ENCODE measurements at regions of chr11 and their contacts with region 1.

Region 1: DNA sequence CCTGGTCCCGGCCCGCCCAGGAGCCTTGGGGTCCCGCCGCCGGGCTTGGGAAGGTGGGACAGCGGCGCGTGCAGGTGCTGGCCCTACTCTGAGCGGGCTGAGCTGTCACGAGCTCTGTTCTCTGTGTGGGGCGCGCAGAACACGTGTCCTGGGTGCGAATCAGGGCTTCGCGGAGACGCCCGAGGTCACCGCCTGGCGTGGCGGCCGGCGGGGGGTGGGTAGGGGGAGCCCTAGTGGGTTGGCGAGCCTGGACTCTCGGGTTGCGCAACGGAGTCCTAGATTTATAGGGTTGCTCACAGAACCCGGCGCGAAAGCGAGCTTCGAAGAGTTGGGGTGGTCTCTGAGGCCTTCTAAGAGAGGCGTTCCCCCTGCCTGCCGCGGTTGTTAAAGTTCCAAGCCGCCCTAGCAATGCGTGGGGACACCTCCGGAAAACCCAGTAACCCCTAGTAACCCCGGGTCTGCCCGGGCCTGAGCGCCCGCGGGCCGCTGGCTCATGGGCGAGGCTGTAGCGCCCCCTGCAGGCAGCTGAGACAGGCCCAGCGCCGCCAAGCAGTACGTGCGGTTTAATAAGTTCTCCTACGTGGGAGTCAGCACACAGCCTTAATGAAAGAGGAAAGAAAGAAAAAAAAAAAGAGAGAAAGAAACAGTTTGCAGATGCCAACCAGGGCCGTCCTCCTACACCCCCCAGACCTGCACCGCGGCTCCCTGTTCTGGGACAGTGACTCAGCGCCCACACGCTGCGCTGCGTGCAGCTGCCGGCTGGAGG is 2.8 kb downstream of the ADM start:
- DNase-seq: peak; percentile 83 to 90
- H3K4me3 ChIP-seq: peak overlapping the region; percentile 64
- H3K4me3 Mint-ChIP-seq: peak overlapping the region; percentile 85
- H3K27ac Mint-ChIP-seq: peak overlapping the region; percentile 81
- H3K4me1 ChIP-seq: peaks cover 28% of the 10 kb centered on the region
- H3K4me1 Mint-ChIP-seq: peaks cover 36% of the 10 kb centered on the region
- H3K27me3 ChIP-seq: no peaks in the 10 kb centered on the region
- H3K27me3 Mint-ChIP-seq: peaks cover 3% of the 10 kb centered on the region
- CTCF ChIP-seq: peak; percentile 88 to 97

Region 2: GRCh38 chr11:9613118-9613829 is 694.4 kb before region 1 on chr11:
- CTCF ChIA-PET with region 1: interaction called, 7 read pairs
- POLR2A ChIA-PET with region 1: interaction called, 4 read pairs
- intact Hi-C with region 1: loop called (anchors 1 kb)
- DNase-seq: peak; percentile 97 to 99
- H3K4me3 ChIP-seq: peak overlapping the region; percentile 43
- H3K4me3 Mint-ChIP-seq: peak overlapping the region; percentile 93
- H3K27ac Mint-ChIP-seq: peak overlapping the region; percentile 98
- H3K4me1 ChIP-seq: peaks cover 33% of the 10 kb centered on the region
- H3K4me1 Mint-ChIP-seq: peaks cover 37% of the 10 kb centered on the region
- H3K27me3 ChIP-seq: no peaks in the 10 kb centered on the region
- H3K27me3 Mint-ChIP-seq: no peaks in the 10 kb centered on the region
- CTCF ChIP-seq: peak; percentile 86 to 98

Region 3: GRCh38 chr11:9990221-9990975 is 317.2 kb before region 1 on chr11:
- CTCF ChIA-PET with region 1: no interaction called
- POLR2A ChIA-PET with region 1: no interaction called
- intact Hi-C with region 1: loop called (anchors 1 kb)
- DNase-seq: peak in 1 of 2 experiments; percentile 17
- H3K4me3 ChIP-seq: no peak overlapping the region
- H3K4me3 Mint-ChIP-seq: no peak overlapping the region
- H3K27ac Mint-ChIP-seq: no peak overlapping the region
- H3K4me1 ChIP-seq: no peaks in the 10 kb centered on the region
- H3K4me1 Mint-ChIP-seq: no peaks in the 10 kb centered on the region
- H3K27me3 ChIP-seq: no peaks in the 10 kb centered on the region
- H3K27me3 Mint-ChIP-seq: no peaks in the 10 kb centered on the region
- CTCF ChIP-seq: peak in 1 of 2 experiments; percentile 43

Region 4: DNA sequence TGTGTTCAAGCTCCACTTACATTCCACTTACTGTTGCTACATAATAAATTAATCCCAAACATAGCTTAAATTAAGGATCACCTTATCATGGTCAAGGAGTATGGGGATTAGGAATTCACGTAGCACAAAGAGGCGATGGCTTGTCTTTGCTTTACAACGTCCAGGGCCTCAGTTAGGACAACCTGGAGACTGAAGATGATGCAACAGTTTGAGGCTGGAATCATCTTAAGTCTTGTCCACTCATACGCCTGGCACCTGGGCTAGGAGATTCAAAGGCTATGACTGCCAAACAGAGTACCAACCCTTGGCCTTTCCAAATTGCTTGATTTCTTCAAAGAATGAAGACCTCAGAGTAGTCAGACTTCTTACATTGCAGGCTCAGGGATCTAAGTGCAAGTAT is 162.7 kb before region 1 on chr11:
- CTCF ChIA-PET with region 1: no interaction called
- POLR2A ChIA-PET with region 1: no interaction called
- intact Hi-C with region 1: no loop called
- DNase-seq: no peak
- H3K4me3 ChIP-seq: no peak overlapping the region
- H3K4me3 Mint-ChIP-seq: no peak overlapping the region
- H3K27ac Mint-ChIP-seq: no peak overlapping the region
- H3K4me1 ChIP-seq: no peaks in the 10 kb centered on the region
- H3K4me1 Mint-ChIP-seq: no peaks in the 10 kb centered on the region
- H3K27me3 ChIP-seq: no peaks in the 10 kb centered on the region
- H3K27me3 Mint-ChIP-seq: no peaks in the 10 kb centered on the region
- CTCF ChIP-seq: no peak

Region 5: GRCh38 chr11:10322830-10323792 is 15.5 kb after region 1 on chr11:
- CTCF ChIA-PET with region 1: interaction called, 34 read pairs
- POLR2A ChIA-PET with region 1: interaction called, 7 read pairs
- intact Hi-C with region 1: loop called (anchors 1 kb)
- DNase-seq: peak; percentile 70 to 72
- H3K4me3 ChIP-seq: no peak overlapping the region
- H3K4me3 Mint-ChIP-seq: peak overlapping the region; percentile 56
- H3K27ac Mint-ChIP-seq: peak overlapping the region; percentile 90
- H3K4me1 ChIP-seq: peaks cover 65% of the 10 kb centered on the region
- H3K4me1 Mint-ChIP-seq: peaks cover 41% of the 10 kb centered on the region
- H3K27me3 ChIP-seq: no peaks in the 10 kb centered on the region
- H3K27me3 Mint-ChIP-seq: no peaks in the 10 kb centered on the region
- CTCF ChIP-seq: peak; percentile 42 to 50

Region 6: GRCh38 chr11:10366568-10367370 is 59.1 kb after region 1 on chr11:
- CTCF ChIA-PET with region 1: interaction called, 44 read pairs
- POLR2A ChIA-PET with region 1: interaction called, 21 read pairs
- intact Hi-C with region 1: loop called (anchors 1 kb)
- DNase-seq: peak; percentile 91 to 94
- H3K4me3 ChIP-seq: no peak overlapping the region
- H3K4me3 Mint-ChIP-seq: peak overlapping the region; percentile 42
- H3K27ac Mint-ChIP-seq: peak overlapping the region; percentile 69
- H3K4me1 ChIP-seq: peaks cover 15% of the 10 kb centered on the region
- H3K4me1 Mint-ChIP-seq: peaks cover 11% of the 10 kb centered on the region
- H3K27me3 ChIP-seq: no peaks in the 10 kb centered on the region
- H3K27me3 Mint-ChIP-seq: no peaks in the 10 kb centered on the region
- CTCF ChIP-seq: peak; percentile 92 to 94

Region 7: GRCh38 chr11:10750838-10751580 is 443.4 kb after region 1 on chr11 and contains the start of gene CTR9:
- CTCF ChIA-PET with region 1: no interaction called
- POLR2A ChIA-PET with region 1: interaction called, 3 read pairs
- intact Hi-C with region 1: loop called (anchors 5 kb)
- DNase-seq: peak; percentile 96 to 97
- H3K4me3 ChIP-seq: peak within 1 kb of the TSS; percentile 70
- H3K4me3 Mint-ChIP-seq: peak within 1 kb of the TSS; percentile 91
- H3K27ac Mint-ChIP-seq: peak within 1 kb of the TSS; percentile 90
- H3K4me1 ChIP-seq: peaks cover 13% of the 10 kb centered on the region; the same call in 1 of the 2 replicates
- H3K4me1 Mint-ChIP-seq: peaks cover 6% of the 10 kb centered on the region
- H3K27me3 ChIP-seq: no peaks in the 10 kb centered on the region
- H3K27me3 Mint-ChIP-seq: no peaks in the 10 kb centered on the region
- CTCF ChIP-seq: peak in 1 of 2 experiments; percentile 50
- total RNA-seq, gene CTR9: 51.1 and 54.0 TPM in 2 replicates